Calu3 (cell line): ENCODE measurements at regions of chr4 and their contacts with region 1.

Region 1: GRCh38 chr4:37490391-37491347 is 195.5 kb downstream of the RELL1 start:
- DNase-seq: peak; percentile 24
- H3K4me3 Mint-ChIP-seq: peak overlapping the region; percentile 62
- H3K27ac Mint-ChIP-seq: peak overlapping the region; percentile 96
- H3K4me1 Mint-ChIP-seq: peaks cover 46% of the 10 kb centered on the region
- H3K27me3 Mint-ChIP-seq: no peaks in the 10 kb centered on the region
- CTCF ChIP-seq: no peak

Region 2: GRCh38 chr4:37528166-37528885 is 37.7 kb after region 1 on chr4:
- CTCF ChIA-PET with region 1: no interaction called
- intact Hi-C with region 1: loop called (anchors 5 kb)
- DNase-seq: peak; percentile 52
- H3K4me3 Mint-ChIP-seq: no peak overlapping the region
- H3K27ac Mint-ChIP-seq: no peak overlapping the region
- H3K4me1 Mint-ChIP-seq: peaks cover 11% of the 10 kb centered on the region
- H3K27me3 Mint-ChIP-seq: no peaks in the 10 kb centered on the region
- CTCF ChIP-seq: no peak